ENCODE measurements at regions of chr1 and their contacts with region 1.

Region 1: GRCh38 chr1:222438661-222439060 is 109.2 kb downstream of the HHIPL2 start:
- DNase-seq: no peak
- ATAC-seq: no peak
- H3K4me3 ChIP-seq: no peak overlapping the region
- H3K27ac ChIP-seq: no peak overlapping the region
- H3K4me1 ChIP-seq: no peaks in the 10 kb centered on the region
- H3K27me3 ChIP-seq: peaks cover 23% of the 10 kb centered on the region
- CTCF ChIP-seq: no peak

Region 2: GRCh38 chr1:222124602-222125001 is 314.1 kb before region 1 on chr1:
- CTCF ChIA-PET with region 1: no interaction called
- POLR2A ChIA-PET with region 1: no interaction called
- intact Hi-C with region 1: loop called (anchors 5 kb)
- DNase-seq: peak; percentile 32
- ATAC-seq: peak; percentile 35; the same call in 1 of the 2 replicates
- H3K4me3 ChIP-seq: no peak overlapping the region
- H3K27ac ChIP-seq: no peak overlapping the region
- H3K4me1 ChIP-seq: no peaks in the 10 kb centered on the region
- H3K27me3 ChIP-seq: no peaks in the 10 kb centered on the region
- CTCF ChIP-seq: peak; percentile 83

Region 3: DNA sequence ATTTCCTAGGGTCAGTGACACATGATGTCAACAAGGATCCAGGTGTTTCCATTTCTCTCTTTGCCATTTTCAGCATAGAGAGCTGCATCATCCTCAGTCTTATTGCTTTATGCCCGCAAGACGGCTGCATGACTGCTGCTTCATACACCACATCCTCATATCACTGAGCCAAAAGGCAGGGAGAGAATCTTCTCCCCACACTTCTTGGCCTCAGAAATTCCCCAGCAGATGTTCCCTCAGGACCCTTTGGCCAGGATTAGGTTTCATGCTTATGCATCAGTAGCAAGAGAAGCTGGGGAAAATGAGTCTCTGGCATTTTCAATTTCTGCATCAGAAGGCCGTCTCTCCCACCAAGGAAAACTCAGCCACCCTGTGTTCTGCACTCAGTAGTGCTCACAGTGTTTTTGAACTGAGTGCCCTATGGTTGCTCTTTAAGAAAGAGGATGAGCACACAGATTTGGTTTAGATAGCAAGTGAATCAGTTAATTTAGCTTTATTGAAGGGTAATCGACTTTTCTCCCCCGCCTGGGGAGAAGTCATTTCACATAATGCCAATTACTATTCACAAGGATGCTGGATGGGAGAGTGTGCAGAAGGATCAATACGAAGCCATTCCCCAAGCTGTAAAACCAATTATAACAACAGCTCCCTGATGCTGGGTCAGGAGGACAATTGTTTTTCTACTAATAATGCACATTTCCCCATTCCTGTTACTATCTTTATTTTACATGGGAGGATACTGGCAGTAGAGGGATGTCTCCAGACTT is 250.9 kb before region 1 on chr1:
- CTCF ChIA-PET with region 1: no interaction called
- POLR2A ChIA-PET with region 1: no interaction called
- intact Hi-C with region 1: no loop called
- DNase-seq: no peak
- ATAC-seq: no peak
- H3K4me3 ChIP-seq: no peak overlapping the region
- H3K27ac ChIP-seq: no peak overlapping the region
- H3K4me1 ChIP-seq: peaks cover 6% of the 10 kb centered on the region
- H3K27me3 ChIP-seq: peaks cover 24% of the 10 kb centered on the region; the same call in 1 of the 2 replicates
- CTCF ChIP-seq: no peak